Activated B cell treated with CpG ODN at 0.5 μM for 24 hours (primary cell): ENCODE measurements at regions of chr9 and their contacts with region 1.

Region 1: DNA sequence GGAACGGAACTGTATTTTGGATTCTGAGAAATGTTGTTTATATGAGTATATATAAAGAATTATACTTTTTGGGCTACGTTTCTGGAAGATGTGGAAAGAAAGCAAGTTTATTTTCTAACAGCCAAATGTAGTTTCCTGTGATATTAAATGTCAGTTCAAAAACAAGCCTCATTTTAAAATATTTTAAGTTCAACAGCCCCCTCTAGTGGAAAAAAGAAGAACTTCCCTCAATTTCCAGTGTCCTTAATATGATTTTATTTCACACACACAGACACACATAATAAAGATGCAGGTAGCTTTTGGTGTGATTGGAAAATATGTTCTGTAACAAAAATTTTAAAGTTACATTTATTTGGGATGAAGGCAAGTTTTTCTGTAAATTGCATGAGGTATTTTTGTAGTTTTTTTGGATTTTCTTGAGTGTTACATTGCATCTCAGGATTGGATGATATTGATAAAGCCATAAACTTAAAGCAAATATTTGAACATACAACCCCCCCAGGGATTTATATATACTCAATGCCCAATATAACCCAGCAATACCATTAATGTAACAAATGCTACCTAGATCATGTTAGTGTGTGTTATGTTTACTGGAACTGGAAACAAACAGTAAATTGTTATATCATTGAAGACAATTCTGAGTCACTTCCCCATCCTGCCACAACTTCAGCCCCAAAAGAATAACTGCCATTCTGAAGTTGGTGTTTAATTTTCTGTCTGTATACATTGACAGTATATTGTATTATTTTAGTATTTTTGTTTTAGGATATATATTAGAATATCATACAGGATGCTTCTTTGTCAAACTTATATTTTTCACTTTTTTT is 54.0 kb downstream of the CCDC171 start:
- DNase-seq: no peak
- ATAC-seq: no peak
- H3K4me3 Mint-ChIP-seq: no peak overlapping the region
- H3K27ac Mint-ChIP-seq: no peak overlapping the region
- H3K4me1 Mint-ChIP-seq: no peaks in the 10 kb centered on the region
- H3K27me3 Mint-ChIP-seq: no peaks in the 10 kb centered on the region
- CTCF ChIP-seq: peak; percentile 66

Region 2: GRCh38 chr9:15211160-15211814 is 395.6 kb before region 1 on chr9:
- CTCF ChIA-PET with region 1: interaction called, 26 read pairs
- POLR2A ChIA-PET with region 1: no interaction called
- intact Hi-C with region 1: loop called (anchors 1 kb)
- DNase-seq: no peak
- ATAC-seq: peak; percentile 49
- H3K4me3 Mint-ChIP-seq: no peak overlapping the region
- H3K27ac Mint-ChIP-seq: no peak overlapping the region
- H3K4me1 Mint-ChIP-seq: no peaks in the 10 kb centered on the region
- H3K27me3 Mint-ChIP-seq: no peaks in the 10 kb centered on the region
- CTCF ChIP-seq: peak; percentile 89

Region 3: DNA sequence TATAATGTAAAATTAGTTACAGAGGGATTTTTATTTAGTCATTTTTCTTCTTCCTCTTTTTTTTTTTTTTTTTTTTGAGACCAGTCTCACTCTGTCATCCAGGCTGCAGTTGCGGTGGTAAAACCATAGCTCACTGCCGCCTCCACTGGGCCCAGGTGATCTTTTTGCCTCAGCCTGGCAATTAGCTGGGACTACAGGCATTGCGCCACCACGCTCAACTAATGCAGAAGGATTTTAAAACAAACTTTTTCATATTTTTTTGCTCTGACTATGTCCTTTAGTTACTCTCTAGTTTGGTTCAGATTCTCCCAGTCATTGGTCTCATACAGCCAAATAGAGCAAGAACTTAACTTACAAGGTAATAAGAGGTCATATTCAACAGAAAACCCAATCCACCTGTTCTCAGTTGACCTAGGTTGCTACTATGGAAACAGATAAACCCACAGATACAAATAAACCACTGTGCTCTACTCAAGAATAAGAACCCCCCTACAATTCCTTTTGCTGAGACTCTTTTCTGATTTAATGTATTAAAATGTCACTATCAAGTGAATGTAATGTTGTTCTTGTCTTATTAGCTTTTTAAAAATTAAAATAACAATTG is 249.7 kb before region 1 on chr9:
- CTCF ChIA-PET with region 1: no interaction called
- POLR2A ChIA-PET with region 1: no interaction called
- intact Hi-C with region 1: loop called (anchors 10 kb)
- DNase-seq: no peak
- ATAC-seq: peak; percentile 87
- H3K4me3 Mint-ChIP-seq: no peak overlapping the region
- H3K27ac Mint-ChIP-seq: no peak overlapping the region
- H3K4me1 Mint-ChIP-seq: peaks cover 6% of the 10 kb centered on the region
- H3K27me3 Mint-ChIP-seq: no peaks in the 10 kb centered on the region
- CTCF ChIP-seq: no peak

Region 4: DNA sequence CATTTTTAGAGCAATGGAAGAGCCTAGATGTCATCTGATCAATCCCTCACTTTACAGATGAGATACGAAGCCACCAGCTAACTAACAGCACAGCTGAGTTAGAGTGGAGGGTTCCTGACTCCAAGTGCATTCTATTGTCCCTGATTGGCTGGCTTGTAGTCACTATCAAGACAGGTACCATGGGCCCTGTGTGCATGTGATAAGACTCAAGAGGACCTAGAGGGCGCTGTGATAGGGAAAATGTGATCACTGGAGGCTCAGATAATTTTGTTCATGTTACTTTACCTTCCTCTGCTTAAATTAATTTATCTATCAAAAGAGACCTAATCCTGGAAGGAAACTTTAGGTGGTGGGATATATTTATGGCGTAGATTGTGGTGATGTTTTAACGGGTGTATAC is 203.7 kb before region 1 on chr9:
- CTCF ChIA-PET with region 1: no interaction called
- POLR2A ChIA-PET with region 1: no interaction called
- intact Hi-C with region 1: no loop called
- DNase-seq: no peak
- ATAC-seq: no peak
- H3K4me3 Mint-ChIP-seq: no peak overlapping the region
- H3K27ac Mint-ChIP-seq: no peak overlapping the region
- H3K4me1 Mint-ChIP-seq: no peaks in the 10 kb centered on the region
- H3K27me3 Mint-ChIP-seq: no peaks in the 10 kb centered on the region
- CTCF ChIP-seq: no peak

Region 5: DNA sequence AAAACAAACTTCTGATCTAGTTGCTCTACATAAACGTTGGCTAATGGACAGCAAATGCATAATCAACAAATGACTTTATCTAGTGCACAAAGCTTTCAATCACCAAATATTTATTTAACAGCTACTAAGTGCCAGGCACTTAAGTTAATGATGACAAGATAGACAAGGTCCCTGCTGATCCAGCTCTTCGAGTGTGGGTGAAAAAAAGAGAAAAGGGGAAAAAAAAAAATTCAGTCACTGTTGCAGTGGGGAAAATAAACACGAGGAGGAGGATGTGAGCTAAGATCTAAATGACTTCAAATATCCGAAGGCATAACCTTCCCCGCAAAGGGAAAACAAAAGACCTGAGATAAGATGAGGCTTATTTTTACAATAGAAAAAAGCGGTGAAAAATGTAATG is 105.7 kb before region 1 on chr9:
- CTCF ChIA-PET with region 1: interaction called, 5 read pairs
- POLR2A ChIA-PET with region 1: interaction called, 4 read pairs
- intact Hi-C with region 1: loop called (anchors 1 kb)
- DNase-seq: no peak
- ATAC-seq: no peak
- H3K4me3 Mint-ChIP-seq: no peak overlapping the region
- H3K27ac Mint-ChIP-seq: no peak overlapping the region
- H3K4me1 Mint-ChIP-seq: peaks cover 23% of the 10 kb centered on the region
- H3K27me3 Mint-ChIP-seq: no peaks in the 10 kb centered on the region
- CTCF ChIP-seq: no peak